Transverse colon (tissue), 4 donors: ENCODE measurements at regions of chr14 and their contacts with region 1.

Region 1: DNA sequence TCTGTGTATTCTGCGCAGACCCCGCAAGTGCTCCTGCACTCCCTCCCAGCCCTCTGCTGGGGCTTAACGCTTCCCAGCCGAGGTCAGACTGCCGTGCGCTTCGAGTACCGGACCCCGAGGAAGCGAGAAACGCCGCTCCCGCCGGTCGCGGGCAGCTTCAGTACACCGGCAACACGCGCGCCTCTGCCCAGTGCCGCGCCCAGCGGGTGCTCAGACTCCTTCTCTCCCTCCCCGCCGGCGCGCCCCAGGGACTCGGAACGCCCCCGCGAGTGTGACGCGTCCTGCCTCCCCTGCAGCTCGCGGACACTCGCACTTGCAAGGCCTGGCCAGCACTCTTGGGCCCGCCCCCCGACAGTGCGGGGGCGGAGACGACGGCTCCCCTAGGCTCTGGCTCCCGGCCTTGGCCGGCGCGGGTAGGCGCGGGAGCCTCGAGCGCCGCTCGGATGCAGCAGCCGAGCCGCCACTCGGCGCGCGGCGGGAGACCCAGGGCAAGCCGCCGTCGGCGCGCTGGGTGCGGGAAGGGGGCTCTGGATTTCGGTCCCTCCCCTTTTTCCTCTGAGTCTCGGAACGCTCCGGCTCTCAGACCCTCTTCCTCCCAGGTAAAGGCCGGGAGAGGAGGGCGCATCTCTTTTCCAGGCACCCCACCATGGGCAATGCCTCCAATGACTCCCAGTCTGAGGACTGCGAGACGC is at the start of gene PTGER2:
- DNase-seq: peak; percentile 95
- H3K4me3 ChIP-seq: peak within 1 kb of the TSS; percentile 42 to 67 (median 50)
- H3K27ac ChIP-seq: peak within 1 kb of the TSS; percentile 74 to 83 (median 82)
- H3K4me1 ChIP-seq: peaks cover 3 to 29% (median 10%) of the 10 kb centered on the region in 4 donors
- H3K27me3 ChIP-seq: peaks cover 6% of the 10 kb centered on the region
- CTCF ChIP-seq: no peak
- EP300 ChIP-seq: no peak
- POLR2A ChIP-seq: peak; percentile 80
- total RNA-seq, gene PTGER2: 1.1 to 9.4 (median 4.9) TPM

Region 2: GRCh38 chr14:52360831-52361230 is 46.8 kb after region 1 on chr14:
- in situ Hi-C with region 1: no loop called
- intact Hi-C with region 1: loop called (anchors 2 kb)
- DNase-seq: peak; percentile 37
- H3K4me3 ChIP-seq: no peak overlapping the region
- H3K27ac ChIP-seq: peak overlapping the region; percentile 65 to 75 (median 66)
- H3K4me1 ChIP-seq: peaks cover 3 to 46% (median 9%) of the 10 kb centered on the region in 4 donors
- H3K27me3 ChIP-seq: no peaks in the 10 kb centered on the region
- CTCF ChIP-seq: no peak
- EP300 ChIP-seq: no peak
- POLR2A ChIP-seq: no peak